ENCODE measurements at regions of chr1 and their contacts with region 1.

Region 1: DNA sequence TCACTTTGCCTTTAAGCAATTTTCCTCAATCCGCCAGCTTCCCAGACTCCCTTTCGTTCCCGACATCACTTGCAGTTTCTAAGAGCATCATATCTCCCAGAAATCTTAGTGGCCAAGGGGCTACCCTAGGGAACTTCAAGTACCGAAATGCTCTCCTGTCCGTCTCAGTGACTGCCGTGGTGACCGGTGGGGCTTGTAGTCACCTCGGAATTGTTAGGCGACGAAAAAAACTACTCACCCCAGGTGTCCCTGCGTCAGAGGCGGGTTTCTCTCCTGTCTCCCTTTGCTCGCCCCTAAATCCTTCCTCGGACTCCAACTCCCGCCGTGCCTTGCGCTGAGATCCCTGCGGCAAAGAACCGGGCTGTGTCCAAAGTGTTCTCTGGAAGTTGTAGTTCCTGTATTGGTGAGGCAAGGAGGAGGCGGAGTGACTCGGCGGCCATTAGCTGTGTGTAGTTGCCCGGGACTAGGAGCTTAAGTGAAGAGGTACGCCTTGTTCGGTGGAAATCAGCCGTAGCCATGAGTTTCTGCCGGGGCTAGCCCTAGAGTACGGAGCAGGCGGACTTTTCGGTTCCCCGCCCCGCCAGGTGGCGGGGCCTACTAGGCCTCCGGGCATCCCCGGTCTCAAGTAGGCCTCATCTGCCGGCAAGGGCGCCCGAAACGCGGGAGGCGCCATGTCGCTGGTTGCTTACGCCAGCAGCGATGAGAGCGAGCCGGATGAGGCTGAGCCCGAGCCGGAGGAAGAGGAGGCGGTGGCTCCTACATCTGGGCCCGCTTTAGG is at the start of gene PRCC:
- DNase-seq: peak; percentile 94 to 98
- H3K4me3 ChIP-seq: peak within 1 kb of the TSS; percentile 67 to 97 (median 86)
- H3K27ac ChIP-seq: peak within 1 kb of the TSS; percentile 86
- H3K4me1 ChIP-seq: peaks cover 0 to 16% (median 6%) of the 10 kb centered on the region in 4 experiments; a peak in 5 of 7 replicates
- H3K27me3 ChIP-seq: no peaks in the 10 kb centered on the region
- CTCF ChIP-seq: 0 out of 4 replicates have a peak, but pooled peaks of 1 of the 3 experiments have one; percentile 1
- EP300 ChIP-seq: no peak
- POLR2A ChIP-seq: peak in 1 of 2 experiments; percentile 74; a peak in 2 of 3 replicates
- RAD21 ChIP-seq: no peak
- total RNA-seq, gene PRCC: 102 and 115 TPM in 2 replicates

Region 2: GRCh38 chr1:156076501-156077429 is 690.5 kb before region 1 on chr1:
- CTCF ChIA-PET with region 1: no interaction called
- POLR2A ChIA-PET with region 1: no interaction called
- DNase-seq: peak in 1 of 2 experiments; percentile 84
- H3K4me3 ChIP-seq: peak overlapping the region in 3 of 4 experiments; percentile 2 to 44 (median 4); a peak in 5 of 8 replicates
- H3K27ac ChIP-seq: peak overlapping the region; percentile 53; the same call in 1 of the 2 replicates
- H3K4me1 ChIP-seq: peaks cover 24 to 57% (median 48%) of the 10 kb centered on the region in 4 experiments
- H3K27me3 ChIP-seq: no peaks in the 10 kb centered on the region
- CTCF ChIP-seq: no peak
- EP300 ChIP-seq: no peak
- POLR2A ChIP-seq: no peak
- RAD21 ChIP-seq: no peak

Region 3: DNA sequence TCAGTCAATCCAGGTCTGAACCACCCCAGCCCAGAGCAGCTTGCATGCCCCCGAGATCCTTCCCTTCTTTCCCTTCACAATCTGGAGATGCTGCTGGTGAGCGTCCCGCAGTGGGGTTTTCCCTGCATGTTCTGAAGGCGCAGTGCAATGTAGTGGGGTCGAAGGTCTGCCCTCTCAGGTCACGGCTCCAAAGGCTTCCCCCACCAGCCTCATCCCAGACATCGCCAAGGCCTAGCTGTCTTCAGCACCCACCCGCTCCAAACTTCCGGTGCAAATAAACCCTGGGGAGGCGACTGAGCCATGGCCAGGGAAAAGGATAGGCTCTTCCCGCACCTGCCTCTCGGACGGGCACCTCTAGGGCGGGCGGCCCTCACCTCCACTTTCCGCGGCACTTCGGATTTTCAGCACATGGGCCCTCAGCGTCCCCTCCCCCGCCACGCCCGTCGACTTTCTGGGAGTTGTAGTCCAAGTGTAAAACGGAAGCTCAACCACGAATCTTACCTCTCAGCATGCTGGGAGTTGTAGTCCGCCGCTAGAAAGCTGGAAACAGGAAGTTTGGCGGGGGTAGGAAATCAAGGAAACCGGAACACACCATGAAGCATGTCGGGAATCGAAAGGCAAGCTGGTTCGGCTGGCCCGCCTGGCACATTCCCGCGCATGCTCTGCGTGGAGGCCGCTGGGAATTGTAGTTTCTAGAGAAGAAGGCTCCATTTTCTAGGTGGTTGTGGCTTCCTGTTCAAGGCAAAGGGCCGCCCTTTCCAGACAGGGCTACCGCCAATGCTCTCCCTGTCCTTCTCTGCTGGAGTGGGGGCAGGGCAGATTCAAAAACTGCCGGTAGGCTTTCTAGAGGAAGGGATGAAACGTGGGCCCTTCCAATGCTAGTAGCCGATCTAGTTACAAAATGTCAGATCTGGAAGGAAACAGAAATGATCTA is 26.3 kb before region 1 on chr1 and contains the start of gene MRPL24:
- CTCF ChIA-PET with region 1: interaction called, 5 read pairs
- POLR2A ChIA-PET with region 1: interaction called, 12 read pairs
- DNase-seq: peak; percentile 93 to 99
- H3K4me3 ChIP-seq: peak within 1 kb of the TSS; percentile 55 to 95 (median 84)
- H3K27ac ChIP-seq: peak within 1 kb of the TSS; percentile 72
- H3K4me1 ChIP-seq: peaks cover 3 to 16% (median 7%) of the 10 kb centered on the region in 4 experiments; a peak in 6 of 7 replicates
- H3K27me3 ChIP-seq: no peaks in the 10 kb centered on the region
- CTCF ChIP-seq: peak in 1 of 3 experiments; percentile 12; a peak in 1 of 4 replicates
- EP300 ChIP-seq: no peak
- POLR2A ChIP-seq: peak; percentile 58 to 88
- RAD21 ChIP-seq: 0 out of 4 replicates have a peak, but pooled peaks of 1 of the 2 experiments have one; percentile 19
- total RNA-seq, gene MRPL24: 34.4 and 35.2 TPM in 2 replicates

Region 4: GRCh38 chr1:156746728-156747631 is 20.3 kb before region 1 on chr1:
- CTCF ChIA-PET with region 1: interaction called, 6 read pairs
- POLR2A ChIA-PET with region 1: interaction called, 121 read pairs
- DNase-seq: peak in 1 of 2 experiments; percentile 91
- H3K4me3 ChIP-seq: peak overlapping the region; percentile 52 to 100 (median 64)
- H3K27ac ChIP-seq: peak overlapping the region; percentile 100
- H3K4me1 ChIP-seq: peaks cover 32 to 47% (median 33%) of the 10 kb centered on the region in 4 experiments
- H3K27me3 ChIP-seq: no peaks in the 10 kb centered on the region
- CTCF ChIP-seq: peak in 2 of 3 experiments; percentile 26 to 37; a peak in 3 of 4 replicates
- EP300 ChIP-seq: no peak
- POLR2A ChIP-seq: peak; percentile 82 to 89
- RAD21 ChIP-seq: no peak; a peak in 1 of 4 replicates

Region 5: GRCh38 chr1:156751758-156752757 is 15.2 kb before region 1 on chr1:
- CTCF ChIA-PET with region 1: interaction called, 6 read pairs
- POLR2A ChIA-PET with region 1: interaction called, 121 read pairs
- DNase-seq: peak; percentile 91 to 93
- H3K4me3 ChIP-seq: peak overlapping the region; percentile 86 to 100 (median 95)
- H3K27ac ChIP-seq: peak overlapping the region; percentile 85
- H3K4me1 ChIP-seq: peaks cover 24 to 36% (median 27%) of the 10 kb centered on the region in 4 experiments
- H3K27me3 ChIP-seq: no peaks in the 10 kb centered on the region
- CTCF ChIP-seq: no peak; a peak in 1 of 4 replicates
- EP300 ChIP-seq: peak in 1 of 2 experiments; percentile 84; a peak in 1 of 3 replicates
- POLR2A ChIP-seq: peak; percentile 65 to 79; a peak in 2 of 3 replicates
- RAD21 ChIP-seq: no peak

Measured in H1 (cell line).